Gastrocnemius medialis (tissue), 4 donors: ENCODE measurements at regions of chr20 and their contacts with region 1.

Region 1: DNA sequence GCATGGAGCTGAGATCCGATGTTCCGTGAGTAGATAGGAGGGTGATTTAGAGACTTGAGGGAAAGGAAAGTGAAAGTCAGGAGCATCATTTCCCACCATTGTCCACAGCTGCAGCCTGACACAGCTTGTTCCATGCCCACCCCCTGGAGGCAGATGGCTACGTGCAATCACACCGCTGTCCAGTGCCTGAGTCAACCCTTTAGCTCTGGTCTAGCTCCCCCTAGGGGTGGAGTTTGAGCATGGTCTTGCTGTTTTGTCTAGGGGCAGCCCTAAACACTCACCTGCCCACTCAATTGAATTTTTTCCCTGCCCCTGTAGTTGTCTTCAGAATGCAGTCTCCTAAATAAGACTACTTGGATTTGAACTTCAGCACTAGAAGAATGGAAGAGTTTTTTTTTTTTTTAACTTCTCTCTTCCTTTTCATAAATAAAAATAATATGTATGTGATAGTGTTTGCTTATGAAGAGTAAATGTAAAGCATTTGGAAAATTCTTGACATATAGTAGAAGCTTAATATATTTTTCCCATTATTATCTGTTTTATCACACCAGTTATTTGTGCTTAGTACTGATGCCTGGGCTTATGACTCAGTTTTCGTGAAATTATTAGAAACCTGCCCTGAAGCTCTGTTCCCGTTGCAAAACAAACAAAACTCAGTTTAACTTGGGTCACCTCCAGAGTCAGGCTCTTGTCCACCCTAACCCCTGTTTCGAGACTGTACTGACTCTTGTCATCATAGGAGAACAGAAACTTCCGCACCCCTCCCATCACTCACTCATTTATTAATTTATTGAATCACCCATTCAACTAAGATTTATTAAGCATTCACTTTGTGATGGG is 814.8 kb downstream of the MAFB start:
- DNase-seq: peak; percentile 46 to 64
- ATAC-seq: peak; percentile 56 to 85
- H3K4me3 ChIP-seq: no peak overlapping the region
- H3K27ac ChIP-seq: no peak overlapping the region
- H3K4me1 ChIP-seq: peaks cover 17 to 23% of the 10 kb centered on the region in 2 donors
- H3K27me3 ChIP-seq: no peaks in the 10 kb centered on the region
- CTCF ChIP-seq: peak; percentile 49 to 73 (median 61)
- POLR2A ChIP-seq: no peak

Region 2: DNA sequence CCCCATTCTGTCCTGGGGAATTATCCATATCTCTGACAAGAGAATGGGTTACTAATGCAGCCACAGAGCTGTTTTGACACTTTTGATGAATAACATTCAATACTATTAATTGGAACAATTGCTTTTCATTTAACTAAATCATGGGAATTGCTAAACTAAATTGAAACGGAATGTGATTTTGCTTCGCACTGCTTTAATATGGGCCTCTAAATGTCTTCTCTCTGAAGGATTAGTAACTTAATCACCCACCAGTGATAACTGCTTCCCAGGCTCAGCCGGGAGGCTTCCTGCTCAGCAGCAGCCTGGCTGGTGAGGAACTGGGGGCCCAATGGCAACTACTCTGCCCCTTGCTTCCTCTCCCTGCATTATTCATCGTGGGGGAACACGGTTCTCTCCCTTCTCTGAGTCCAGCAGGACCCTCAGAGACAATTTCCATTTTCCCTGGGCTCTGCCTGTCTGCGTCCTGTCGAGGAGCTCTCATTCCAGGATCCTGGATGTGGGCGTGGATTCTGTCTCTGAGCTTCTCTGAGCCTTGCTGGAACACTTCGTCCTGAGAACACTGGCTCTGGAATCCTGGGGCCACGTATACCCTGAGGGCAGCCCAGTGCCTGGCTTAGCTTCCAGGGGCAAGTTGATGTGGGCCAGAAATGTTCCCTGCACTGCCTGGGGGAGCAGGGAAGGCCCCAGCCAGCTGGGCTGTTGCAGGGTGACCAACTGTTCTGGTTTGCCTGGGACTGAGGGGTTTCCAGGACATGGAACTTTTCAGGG is 603.2 kb before region 1 on chr20:
- in situ Hi-C with region 1: loop called (anchors 10 to 25 kb)
- intact Hi-C with region 1: loop called (anchors 5 kb)
- DNase-seq: peak in 1 of 2 donors; percentile 19
- ATAC-seq: no peak
- H3K4me3 ChIP-seq: no peak overlapping the region
- H3K27ac ChIP-seq: no peak overlapping the region
- H3K4me1 ChIP-seq: peaks cover 0 to 4% of the 10 kb centered on the region in 2 donors
- H3K27me3 ChIP-seq: no peaks in the 10 kb centered on the region
- CTCF ChIP-seq: no peak
- POLR2A ChIP-seq: no peak

Region 3: GRCh38 chr20:40010483-40010882 is 136.2 kb after region 1 on chr20:
- in situ Hi-C with region 1: no loop called
- intact Hi-C with region 1: no loop called
- DNase-seq: peak in 1 of 2 donors; percentile 16
- ATAC-seq: no peak
- H3K4me3 ChIP-seq: no peak overlapping the region
- H3K27ac ChIP-seq: no peak overlapping the region
- H3K4me1 ChIP-seq: no peaks in the 10 kb centered on the region
- H3K27me3 ChIP-seq: no peaks in the 10 kb centered on the region
- CTCF ChIP-seq: no peak
- POLR2A ChIP-seq: no peak

Region 4: GRCh38 chr20:40073535-40074111 is 199.4 kb after region 1 on chr20:
- in situ Hi-C with region 1: no loop called
- intact Hi-C with region 1: no loop called
- DNase-seq: no peak
- ATAC-seq: no peak
- H3K4me3 ChIP-seq: no peak overlapping the region
- H3K27ac ChIP-seq: no peak overlapping the region
- H3K4me1 ChIP-seq: peaks cover 8 to 11% of the 10 kb centered on the region in 2 donors
- H3K27me3 ChIP-seq: no peaks in the 10 kb centered on the region
- CTCF ChIP-seq: no peak
- POLR2A ChIP-seq: no peak